ENCODE measurements at regions of chr22 and their contacts with region 1.

Region 1: DNA sequence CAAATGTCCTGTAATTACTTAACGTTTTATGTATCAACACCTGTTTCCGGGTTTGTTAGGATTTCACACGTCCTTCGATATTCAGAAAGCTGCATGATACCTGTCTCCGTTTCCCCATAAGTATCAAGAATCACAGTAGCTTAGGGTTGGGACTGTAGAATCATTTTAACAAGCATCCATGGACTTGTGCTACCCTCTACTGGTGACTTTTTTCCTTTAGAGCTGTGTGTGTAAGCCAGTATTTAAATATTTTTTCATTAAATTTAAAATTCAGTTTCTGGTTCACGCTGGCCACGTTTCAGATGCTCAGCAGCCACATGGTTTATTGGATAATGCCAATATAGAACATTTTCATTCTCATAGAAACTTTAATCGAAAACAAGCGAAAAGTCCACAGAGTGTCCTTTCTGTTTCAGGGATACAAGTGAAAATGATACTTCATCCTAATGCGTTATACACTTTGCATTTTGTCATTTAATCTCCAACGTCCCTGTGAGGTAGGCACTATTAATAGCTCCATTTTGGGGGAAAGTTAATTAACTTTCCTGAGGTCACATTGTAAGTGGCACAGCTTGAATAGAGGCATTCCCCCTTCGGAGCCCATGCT is 61.5 kb upstream of the SLC25A18 start:
- DNase-seq: no peak
- H3K4me3 ChIP-seq: no peak overlapping the region
- H3K27ac ChIP-seq: no peak overlapping the region
- H3K4me1 ChIP-seq: no peaks in the 10 kb centered on the region
- H3K27me3 ChIP-seq: no peaks in the 10 kb centered on the region
- CTCF ChIP-seq: peak in 2 of 3 experiments; percentile 52 to 63; a peak in 2 of 4 replicates
- EP300 ChIP-seq: no peak
- POLR2A ChIP-seq: no peak
- RAD21 ChIP-seq: peak; percentile 90 to 91

Region 2: DNA sequence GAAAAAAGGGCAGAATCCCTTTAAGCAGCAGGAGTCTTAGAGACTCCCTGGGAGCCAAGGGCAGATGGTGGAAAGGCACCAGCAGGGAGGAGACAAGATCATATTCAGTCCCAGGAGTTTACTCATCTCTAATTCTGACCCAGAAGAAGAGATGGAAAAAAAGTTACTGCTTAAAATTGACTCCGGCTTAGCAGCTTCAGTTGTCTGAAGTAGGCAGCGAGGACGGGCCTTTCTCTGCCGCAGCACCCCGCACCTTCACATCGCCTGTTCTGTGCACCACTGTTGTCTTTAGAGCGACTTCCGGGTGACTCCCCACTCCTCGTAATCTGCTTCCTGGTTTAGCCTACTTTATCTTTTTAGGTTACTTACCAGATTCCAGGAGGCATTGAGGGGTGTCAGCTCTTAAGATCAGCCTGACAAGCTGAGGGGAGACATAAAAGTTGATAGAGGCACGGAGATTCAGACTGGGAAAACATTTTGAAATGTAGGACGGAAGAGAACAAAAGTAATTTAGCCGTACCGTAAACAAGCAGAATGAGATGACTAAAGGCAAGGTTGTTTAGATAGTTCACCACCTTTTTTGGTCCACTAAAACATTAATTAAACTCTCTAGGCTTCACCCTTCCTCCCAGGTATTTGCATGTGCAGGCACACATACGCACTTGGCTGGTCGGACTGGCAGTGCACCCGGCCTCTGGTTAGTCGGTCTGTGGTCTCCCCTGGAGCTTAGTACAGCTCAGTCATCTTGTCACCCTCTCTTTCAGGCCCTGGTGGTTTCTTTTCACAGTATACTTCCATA is 58.2 kb before region 1 on chr22:
- CTCF ChIA-PET with region 1: interaction called, 10 read pairs
- POLR2A ChIA-PET with region 1: no interaction called
- DNase-seq: no peak
- H3K4me3 ChIP-seq: no peak overlapping the region
- H3K27ac ChIP-seq: no peak overlapping the region
- H3K4me1 ChIP-seq: peaks cover 0 to 6% (median 0%) of the 10 kb centered on the region in 4 experiments; a peak in 3 of 7 replicates
- H3K27me3 ChIP-seq: no peaks in the 10 kb centered on the region
- CTCF ChIP-seq: no peak
- EP300 ChIP-seq: no peak
- POLR2A ChIP-seq: no peak
- RAD21 ChIP-seq: no peak